Astrocyte of the cerebellum (primary cell): ENCODE measurements at regions of chr1 and their contacts with region 1.

Region 1: GRCh38 chr1:35715568-35716002 is 3.1 kb downstream of the C1orf216 start:
- DNase-seq: peak; percentile 38
- H3K4me3 ChIP-seq: no peak overlapping the region
- CTCF ChIP-seq: peak; percentile 91

Region 2: GRCh38 chr1:35656148-35656862 is 59.3 kb before region 1 on chr1:
- in situ Hi-C with region 1: loop called (anchors 10 kb)
- DNase-seq: no peak
- H3K4me3 ChIP-seq: no peak overlapping the region
- CTCF ChIP-seq: no peak

Region 3: DNA sequence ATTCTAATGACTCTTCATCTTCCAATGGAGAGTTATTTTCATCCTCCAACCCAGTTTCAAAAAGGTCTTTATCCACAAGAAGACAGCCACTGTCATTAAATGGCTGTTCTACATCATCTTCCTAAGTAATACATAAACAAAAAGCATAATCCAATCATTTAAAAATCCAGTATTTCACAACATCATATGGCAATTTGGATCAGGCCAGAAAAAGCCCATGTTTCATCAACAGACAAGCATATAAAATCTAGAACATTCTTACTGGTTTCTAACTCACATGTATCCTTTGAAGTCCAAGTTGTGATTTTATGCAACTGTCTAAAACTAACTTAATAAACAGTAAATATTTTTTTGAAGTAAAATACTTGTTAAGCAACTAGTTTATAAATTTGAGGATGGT is 47.6 kb after region 1 on chr1:
- in situ Hi-C with region 1: no loop called
- DNase-seq: no peak
- H3K4me3 ChIP-seq: no peak overlapping the region
- CTCF ChIP-seq: no peak